Sigmoid colon (tissue), 7 donors: ENCODE measurements at regions of chr1 and their contacts with region 1.

Region 1: DNA sequence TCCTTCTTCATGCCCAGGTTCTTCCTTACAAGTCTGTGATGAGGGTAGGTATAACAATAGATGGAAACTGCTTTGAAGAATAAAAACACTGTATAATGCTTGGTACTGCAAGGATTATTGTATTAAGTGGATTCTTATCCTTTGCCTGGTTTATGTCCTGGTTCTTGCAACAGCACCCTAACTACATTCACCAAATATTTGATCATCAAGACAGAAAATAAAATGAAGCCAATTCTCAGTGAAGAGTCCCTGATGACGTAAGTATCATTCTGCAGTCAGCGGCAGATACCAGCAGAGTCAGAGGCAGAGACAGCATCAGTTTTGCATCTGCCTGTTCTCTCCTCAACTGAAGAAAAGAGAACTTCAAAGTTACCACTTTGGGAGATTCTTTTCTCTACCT is 19.7 kb downstream of the ARHGEF11 start:
- DNase-seq: no peak
- H3K4me3 ChIP-seq: no peak overlapping the region
- H3K27ac ChIP-seq: peak overlapping the region in 3 of 4 donors; percentile 25 to 67 (median 59)
- H3K4me1 ChIP-seq: peaks cover 0 to 31% (median 20%) of the 10 kb centered on the region in 4 donors
- H3K27me3 ChIP-seq: no peaks in the 10 kb centered on the region
- CTCF ChIP-seq: no peak
- EP300 ChIP-seq: no peak
- POLR2A ChIP-seq: no peak

Region 2: GRCh38 chr1:155540000-155540874 is 1485.6 kb before region 1 on chr1:
- intact Hi-C with region 1: no loop called
- DNase-seq: no peak
- H3K4me3 ChIP-seq: no peak overlapping the region
- H3K27ac ChIP-seq: no peak overlapping the region
- H3K4me1 ChIP-seq: peaks cover 0 to 43% (median 24%) of the 10 kb centered on the region in 4 donors
- H3K27me3 ChIP-seq: no peaks in the 10 kb centered on the region
- CTCF ChIP-seq: no peak
- EP300 ChIP-seq: no peak
- POLR2A ChIP-seq: no peak

Region 3: DNA sequence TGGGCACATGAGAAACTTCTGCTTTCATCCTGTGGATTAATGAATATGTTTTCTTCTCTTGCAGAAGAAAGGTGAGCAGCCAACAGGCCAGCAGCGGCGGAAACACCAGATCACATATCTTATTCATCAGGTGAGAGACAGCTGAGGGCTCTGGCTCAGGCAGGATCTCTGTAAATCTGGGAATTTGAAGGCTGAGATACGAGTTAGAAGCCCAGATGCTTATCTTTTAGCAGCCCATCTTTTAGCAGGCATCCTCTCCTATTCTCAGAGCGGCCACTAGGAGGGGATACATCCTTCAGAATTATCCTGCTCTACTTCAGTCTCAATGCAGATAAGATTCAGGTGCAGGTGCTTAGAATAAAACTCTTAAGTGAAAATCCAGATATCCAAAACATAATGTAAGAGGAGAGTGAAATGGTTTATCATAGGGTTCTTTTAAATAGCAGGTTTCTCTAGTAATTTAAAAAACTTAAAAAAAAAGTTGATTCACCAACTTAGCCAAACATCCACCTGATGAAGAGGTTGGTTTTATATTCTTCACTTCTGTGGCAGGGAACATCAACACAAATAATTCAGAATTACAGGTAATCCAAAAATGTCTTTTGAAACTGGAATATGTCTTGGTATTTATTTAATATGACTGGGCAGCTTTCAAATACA is 228.5 kb before region 1 on chr1:
- intact Hi-C with region 1: no loop called
- DNase-seq: no peak
- H3K4me3 ChIP-seq: no peak overlapping the region
- H3K27ac ChIP-seq: no peak overlapping the region
- H3K4me1 ChIP-seq: peaks cover 0 to 4% (median 0%) of the 10 kb centered on the region in 4 donors
- H3K27me3 ChIP-seq: no peaks in the 10 kb centered on the region
- CTCF ChIP-seq: peak in 3 of 4 experiments; percentile 29 to 65 (median 57)
- EP300 ChIP-seq: no peak
- POLR2A ChIP-seq: no peak

Region 4: DNA sequence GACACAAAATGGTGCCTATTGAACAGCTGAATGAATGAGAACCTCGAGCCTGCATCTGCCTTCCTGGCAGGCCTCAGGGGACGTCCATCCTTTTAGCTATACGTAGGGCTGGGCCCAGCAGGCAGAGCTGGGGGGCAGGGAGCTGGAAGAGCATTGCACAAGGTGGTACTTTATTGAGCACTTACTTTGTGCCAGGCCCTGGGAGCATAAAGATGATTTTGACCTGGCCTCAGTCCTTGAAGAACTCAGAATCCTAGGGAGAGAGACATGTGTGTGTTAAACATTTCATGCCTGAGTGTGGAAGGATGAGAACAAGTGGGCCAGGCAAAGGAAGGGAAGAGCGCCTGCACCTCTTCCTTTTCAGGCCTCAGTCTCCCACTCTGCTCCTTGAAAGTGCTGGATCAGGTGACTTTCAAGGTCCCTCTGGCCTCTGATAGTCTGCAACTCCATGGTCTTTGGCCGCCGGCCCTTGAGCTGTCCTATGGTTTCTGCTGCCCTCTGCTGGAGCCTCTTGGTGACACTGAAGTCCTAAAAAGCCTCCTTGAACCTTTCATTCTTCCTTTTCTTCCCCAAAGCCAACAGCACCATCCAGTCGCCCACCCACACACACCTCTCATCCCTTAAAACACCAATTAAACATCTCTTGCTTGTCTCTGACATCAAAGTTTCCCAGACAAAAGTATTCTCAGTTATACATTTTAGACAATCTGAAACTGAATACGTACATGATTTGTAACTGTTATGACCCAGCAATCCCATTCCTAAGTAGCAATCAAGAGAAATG is 135.9 kb before region 1 on chr1:
- intact Hi-C with region 1: no loop called
- DNase-seq: peak; percentile 89
- H3K4me3 ChIP-seq: no peak overlapping the region
- H3K27ac ChIP-seq: no peak overlapping the region
- H3K4me1 ChIP-seq: peaks cover 0 to 16% (median 14%) of the 10 kb centered on the region in 4 donors
- H3K27me3 ChIP-seq: peaks cover 18 to 27% (median 20%) of the 10 kb centered on the region in 3 donors
- CTCF ChIP-seq: peak; percentile 46 to 75 (median 68)
- EP300 ChIP-seq: no peak
- POLR2A ChIP-seq: no peak

Region 5: DNA sequence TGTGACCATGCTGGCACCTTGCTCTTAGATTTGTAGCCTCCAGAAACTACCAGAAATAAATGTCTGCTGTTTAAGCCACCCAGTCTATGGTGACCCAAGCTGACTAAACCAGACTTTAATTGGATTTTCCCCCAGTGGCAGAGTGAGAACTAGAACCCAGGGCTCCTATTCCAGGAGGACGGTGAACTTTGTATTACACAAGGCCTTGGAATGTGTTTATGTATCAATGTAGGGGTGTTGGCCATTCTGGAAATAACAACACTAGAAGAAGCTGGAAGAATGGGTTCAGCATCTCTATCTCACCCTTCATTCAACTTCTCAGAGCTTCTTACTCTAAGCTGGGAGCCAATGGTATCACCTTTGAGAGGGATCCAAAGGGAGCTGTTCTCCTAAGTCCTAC is 17.4 kb before region 1 on chr1:
- intact Hi-C with region 1: loop called (anchors 2 kb)
- DNase-seq: no peak
- H3K4me3 ChIP-seq: no peak overlapping the region
- H3K27ac ChIP-seq: no peak overlapping the region
- H3K4me1 ChIP-seq: peaks cover 0 to 52% (median 46%) of the 10 kb centered on the region in 4 donors
- H3K27me3 ChIP-seq: no peaks in the 10 kb centered on the region
- CTCF ChIP-seq: no peak
- EP300 ChIP-seq: no peak
- POLR2A ChIP-seq: no peak